ENCODE measurements at regions of chr10 and their contacts with region 1.

Region 1: GRCh38 chr10:22103701-22104470 is 100.4 kb upstream of the DNAJC1 start:
- DNase-seq: peak in 1 of 2 experiments; percentile 55
- H3K4me3 ChIP-seq: no peak overlapping the region
- H3K27ac ChIP-seq: no peak overlapping the region
- H3K4me1 ChIP-seq: no peaks in the 10 kb centered on the region
- H3K27me3 ChIP-seq: no peaks in the 10 kb centered on the region
- CTCF ChIP-seq: peak; percentile 5 to 78 (median 50)
- EP300 ChIP-seq: no peak
- POLR2A ChIP-seq: no peak
- RAD21 ChIP-seq: peak; percentile 69 to 78

Region 2: GRCh38 chr10:22218451-22218850 is 114.6 kb after region 1 on chr10:
- CTCF ChIA-PET with region 1: interaction called, 10 read pairs
- POLR2A ChIA-PET with region 1: no interaction called
- DNase-seq: no peak
- H3K4me3 ChIP-seq: no peak overlapping the region
- H3K27ac ChIP-seq: no peak overlapping the region
- H3K4me1 ChIP-seq: no peaks in the 10 kb centered on the region
- H3K27me3 ChIP-seq: no peaks in the 10 kb centered on the region
- CTCF ChIP-seq: peak; percentile 56 to 72 (median 58)
- EP300 ChIP-seq: no peak
- POLR2A ChIP-seq: no peak
- RAD21 ChIP-seq: peak; percentile 66 to 75

Measured in H1 (cell line).